ENCODE measurements at regions of chr10 and their contacts with region 1.

Region 1: DNA sequence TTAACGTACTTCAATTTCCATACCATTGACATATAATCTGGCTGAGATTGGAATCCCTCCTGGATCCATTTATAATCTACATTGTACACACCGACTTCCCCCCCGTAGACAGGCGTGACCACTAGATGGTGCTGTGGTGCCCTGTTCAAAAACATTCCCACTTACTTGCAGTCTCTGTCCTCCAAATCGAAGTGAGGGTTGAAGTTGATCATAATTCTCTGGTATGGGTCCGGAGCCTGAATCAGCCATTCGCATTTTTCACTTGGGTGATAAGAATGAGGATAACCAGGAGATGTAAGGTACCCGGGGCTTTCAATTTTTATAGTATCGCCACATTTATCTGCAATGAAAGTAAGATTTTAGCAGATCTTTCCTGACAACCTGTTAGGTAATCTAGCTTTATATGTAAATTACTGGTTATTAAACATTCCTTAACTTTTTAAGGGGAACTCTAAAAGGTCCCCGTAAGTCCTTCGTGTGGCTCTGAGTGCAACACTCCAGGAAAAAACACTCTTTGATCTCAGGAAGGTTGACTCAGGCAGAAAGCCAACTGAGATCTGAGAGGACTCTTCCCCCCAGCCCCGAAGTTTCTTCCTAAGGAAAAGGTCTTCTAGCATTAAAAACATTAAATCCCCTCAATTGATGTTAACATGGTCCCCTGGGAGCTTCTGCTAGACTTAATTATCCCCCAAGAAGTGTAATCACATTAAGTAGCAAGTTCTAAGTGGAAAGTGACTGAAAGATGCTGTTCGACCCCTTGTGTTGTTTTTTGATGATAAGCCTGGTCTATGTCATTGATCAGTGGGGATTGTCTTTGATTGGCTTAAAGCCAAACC is 3.7 kb downstream of the NRP1 start:
- DNase-seq: peak; percentile 91

Region 2: DNA sequence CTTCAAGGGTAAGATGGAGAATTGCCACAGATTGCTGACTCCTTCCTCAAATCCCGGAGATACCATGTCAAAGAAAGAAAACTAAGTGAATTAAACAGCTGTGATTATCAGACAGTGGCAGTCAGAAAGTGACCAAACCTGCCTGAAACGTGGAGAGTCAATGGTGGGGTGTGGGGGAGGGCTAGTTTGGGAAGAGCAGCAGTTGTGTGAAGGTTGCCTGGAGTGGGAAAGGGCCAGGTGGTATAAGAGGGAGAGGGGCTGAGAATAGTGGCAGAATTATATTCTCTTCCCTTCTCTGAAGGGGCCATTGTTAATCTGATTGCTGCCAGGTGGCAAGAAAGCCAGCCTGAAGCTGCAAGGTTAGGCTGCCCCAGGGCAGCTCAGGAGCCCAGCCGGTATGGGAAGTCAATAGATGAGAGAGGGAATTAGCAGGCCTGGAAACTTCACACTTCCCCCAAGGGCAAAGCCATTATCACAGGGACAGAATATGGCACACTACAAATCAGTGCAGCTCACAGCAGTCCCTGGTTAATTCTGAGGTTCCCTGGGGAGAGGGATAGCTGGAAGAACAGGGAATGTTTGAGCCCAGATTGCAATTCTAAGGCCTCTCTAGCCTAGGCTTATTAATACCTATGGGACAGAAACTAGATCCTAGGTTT is 288.9 kb before region 1 on chr10:
- intact Hi-C with region 1: no loop called
- DNase-seq: no peak

Region 3: GRCh38 chr10:33125522-33126517 is 204.9 kb before region 1 on chr10:
- intact Hi-C with region 1: loop called (anchors 5 kb)
- DNase-seq: no peak

Region 4: DNA sequence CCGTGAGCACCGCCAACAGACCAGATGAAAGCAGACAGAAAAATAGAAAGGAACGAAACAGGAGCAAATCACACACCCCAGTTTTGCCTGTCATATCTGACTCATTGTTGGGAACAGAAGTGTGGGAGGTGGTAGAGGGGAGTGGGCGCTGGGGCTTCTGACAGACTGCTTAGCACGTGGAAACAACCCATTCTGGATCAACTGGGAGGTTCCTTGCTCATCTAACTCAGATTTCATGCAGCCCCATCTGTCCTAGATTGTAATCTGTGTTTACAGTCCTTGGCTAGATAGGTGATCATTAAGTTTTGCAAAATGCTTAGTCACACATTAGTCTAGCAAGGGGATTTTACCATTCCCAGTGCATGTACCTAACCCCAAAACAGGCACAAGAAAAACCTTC is 150.4 kb before region 1 on chr10:
- intact Hi-C with region 1: no loop called
- DNase-seq: no peak

Region 5: DNA sequence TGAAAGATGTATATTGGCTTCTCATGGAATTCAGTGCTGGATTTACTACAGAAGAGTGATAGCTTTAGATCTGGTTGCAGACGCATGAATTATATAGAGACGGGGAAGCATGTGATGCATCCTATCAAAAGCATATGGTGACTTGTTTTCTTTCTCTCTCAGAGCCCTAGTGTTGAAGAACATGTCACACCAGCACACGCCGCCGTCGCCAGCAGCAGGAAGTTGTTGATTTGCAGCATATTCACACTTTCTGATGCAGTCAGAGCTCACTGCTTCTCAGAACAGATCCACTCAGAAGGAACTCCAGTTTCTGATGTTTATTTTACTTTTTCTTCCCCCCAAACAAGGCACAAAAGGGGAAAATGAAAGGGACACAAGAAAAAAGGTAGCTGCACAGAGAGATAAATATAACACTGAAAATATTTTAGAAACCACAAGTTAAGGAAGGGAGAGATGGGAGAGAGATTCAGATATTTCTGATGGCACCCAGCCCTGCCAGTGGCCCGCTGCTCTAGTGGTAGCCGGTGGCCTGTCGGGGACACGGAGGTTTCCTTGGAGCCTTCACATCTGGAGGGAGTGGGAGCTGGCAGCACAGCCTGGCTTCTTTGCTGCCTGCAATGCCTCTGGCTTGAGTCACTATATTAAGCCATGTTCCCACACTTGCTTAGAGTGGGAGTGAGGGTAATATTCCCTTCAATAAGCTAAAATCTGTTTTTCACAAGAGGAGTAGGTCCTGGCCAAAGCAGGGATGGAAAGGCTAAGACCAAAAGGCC is 119.5 kb before region 1 on chr10:
- intact Hi-C with region 1: loop called (anchors 5 kb)
- DNase-seq: no peak

Region 6: GRCh38 chr10:33661580-33662336 is 331.0 kb after region 1 on chr10:
- intact Hi-C with region 1: loop called (anchors 5 kb)
- DNase-seq: peak; percentile 85

Region 7: GRCh38 chr10:33801748-33802147 is 471.0 kb after region 1 on chr10:
- intact Hi-C with region 1: loop called (anchors 2 kb)
- DNase-seq: no peak

Region 8: GRCh38 chr10:34637418-34637911 is 1306.7 kb after region 1 on chr10:
- intact Hi-C with region 1: loop called (anchors 5 kb)
- DNase-seq: no peak